Heart left ventricle (tissue), 16 donors: ENCODE measurements at regions of chr9 and their contacts with region 1.

Region 1: DNA sequence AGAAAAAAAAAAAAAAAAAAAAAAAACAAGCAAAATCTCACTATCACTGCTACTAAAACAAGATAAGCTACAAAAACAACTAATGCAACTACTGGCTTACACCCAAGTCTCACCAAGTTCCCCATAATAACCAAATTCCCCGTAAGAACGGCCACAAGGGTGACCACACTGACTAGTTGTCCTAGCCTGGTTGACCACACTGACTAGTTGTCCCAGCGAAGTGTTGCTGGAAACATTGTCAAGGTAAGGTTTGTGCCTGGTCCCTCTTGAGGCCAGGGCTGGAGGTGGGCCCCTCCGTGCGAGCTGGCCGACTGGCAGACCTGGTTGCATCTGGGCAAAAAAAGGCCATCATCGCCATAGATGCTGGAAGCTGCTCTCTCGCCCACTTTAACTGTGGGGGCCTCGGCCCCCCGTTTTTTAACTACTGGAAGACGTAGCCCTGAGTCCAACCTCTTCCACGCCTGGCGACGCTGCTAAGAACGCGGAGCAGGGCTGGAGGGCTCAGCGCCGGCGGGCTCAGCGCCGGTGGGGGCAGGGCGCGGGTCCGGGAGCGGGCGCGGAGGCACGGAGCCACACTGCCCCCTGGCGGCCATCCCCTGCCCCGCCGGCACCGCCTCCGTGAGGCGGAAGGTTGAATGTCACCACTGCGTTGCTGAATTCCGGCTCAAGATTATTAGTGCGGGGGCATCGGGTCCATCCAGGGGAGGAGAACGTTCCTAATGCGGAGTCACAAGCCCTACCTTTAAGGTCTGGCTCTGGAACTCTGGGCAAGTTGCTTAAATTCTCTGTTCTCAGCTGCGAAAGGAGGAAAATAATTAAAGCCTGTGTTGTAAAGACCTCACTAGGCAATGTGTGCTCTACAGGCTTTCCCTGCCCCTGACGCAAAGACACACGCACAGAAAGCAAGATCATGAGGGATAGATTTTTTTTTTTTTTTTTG is 84.0 kb downstream of the HSD17B3 start:
- DNase-seq: peak; percentile 61 to 86 (median 72)
- ATAC-seq: peak; percentile 81 to 93 (median 92)
- H3K4me3 ChIP-seq: peak overlapping the region in 10 of 12 donors; percentile 5 to 52 (median 38)
- H3K27ac ChIP-seq: peak overlapping the region in 8 of 12 donors; percentile 0 to 76 (median 51)
- H3K4me1 ChIP-seq: peaks cover 0 to 33% (median 15%) of the 10 kb centered on the region in 12 donors
- H3K27me3 ChIP-seq: peaks cover 0 to 38% (median 10%) of the 10 kb centered on the region in 9 donors
- CTCF ChIP-seq: peak; percentile 95 to 99 (median 97)
- POLR2A ChIP-seq: no peak

Region 2: DNA sequence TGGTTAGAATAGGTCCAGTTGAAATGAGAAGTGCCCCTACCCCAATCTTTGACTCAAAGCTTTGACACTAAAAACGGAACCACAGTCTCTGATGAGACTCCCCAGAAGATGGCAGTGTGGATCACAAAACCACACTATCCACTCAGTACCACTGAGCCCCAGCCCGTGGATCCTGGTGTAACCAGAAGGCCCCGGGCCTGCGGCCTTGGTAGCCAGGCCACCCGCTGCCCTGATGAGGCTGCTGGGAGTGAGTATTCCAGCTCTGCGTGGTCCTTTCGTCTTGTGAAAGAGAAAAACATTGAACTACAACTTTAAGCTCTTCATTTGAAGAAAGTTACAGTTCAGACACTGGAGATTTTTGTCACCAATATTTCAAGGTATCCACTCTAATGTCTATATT is 1536.5 kb before region 1 on chr9:
- intact Hi-C with region 1: loop called in 1 of 10 experiments (anchors 5 kb)
- DNase-seq: peak; percentile 69 to 87 (median 82)
- ATAC-seq: peak; percentile 92 to 98 (median 98)
- H3K4me3 ChIP-seq: no peak overlapping the region
- H3K27ac ChIP-seq: peak overlapping the region in 6 of 12 donors; percentile 11 to 47 (median 32)
- H3K4me1 ChIP-seq: peaks cover 0 to 9% (median 0%) of the 10 kb centered on the region in 12 donors
- H3K27me3 ChIP-seq: no peaks in the 10 kb centered on the region
- CTCF ChIP-seq: peak; percentile 62 to 85 (median 78)
- POLR2A ChIP-seq: no peak

Region 3: DNA sequence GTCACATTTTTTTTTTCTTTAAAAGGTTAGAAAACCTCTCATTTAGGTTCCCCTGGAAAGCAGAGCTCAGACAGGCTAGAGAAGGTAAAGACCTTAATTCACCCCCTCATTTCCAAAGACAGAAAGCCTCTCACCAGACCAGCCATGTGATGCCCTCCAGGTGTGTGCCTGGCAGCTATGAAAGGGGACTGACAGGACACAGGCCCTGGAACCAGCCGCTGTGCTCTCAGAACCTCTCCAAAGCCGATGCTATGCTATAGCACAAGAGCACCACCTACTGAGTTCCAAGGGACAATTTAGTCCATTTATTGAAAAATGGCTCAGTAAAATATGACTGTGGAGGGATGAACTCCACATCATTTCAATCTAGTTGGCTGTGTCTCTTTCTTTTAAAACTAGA is 949.3 kb before region 1 on chr9:
- intact Hi-C with region 1: loop called in 1 of 10 experiments (anchors 10 kb)
- DNase-seq: peak in 1 of 5 donors; percentile 20
- ATAC-seq: peak; percentile 37 to 86 (median 74)
- H3K4me3 ChIP-seq: no peak overlapping the region
- H3K27ac ChIP-seq: no peak overlapping the region
- H3K4me1 ChIP-seq: peaks cover 0 to 2% (median 0%) of the 10 kb centered on the region in 12 donors
- H3K27me3 ChIP-seq: no peaks in the 10 kb centered on the region
- CTCF ChIP-seq: peak in 11 of 12 donors; percentile 19 to 60 (median 38)
- POLR2A ChIP-seq: no peak

Region 4: GRCh38 chr9:95510709-95511615 is 707.1 kb before region 1 on chr9:
- intact Hi-C with region 1: loop called in 1 of 10 experiments (anchors 5 kb)
- DNase-seq: peak; percentile 88 to 93 (median 92)
- ATAC-seq: peak; percentile 74 to 86 (median 80)
- H3K4me3 ChIP-seq: peak overlapping the region; percentile 42 to 96 (median 74)
- H3K27ac ChIP-seq: peak overlapping the region; percentile 43 to 99 (median 92)
- H3K4me1 ChIP-seq: peaks cover 3 to 44% (median 15%) of the 10 kb centered on the region in 12 donors
- H3K27me3 ChIP-seq: peaks cover 0 to 52% (median 0%) of the 10 kb centered on the region in 9 donors
- CTCF ChIP-seq: no peak
- POLR2A ChIP-seq: peak; percentile 9 to 64

Region 5: GRCh38 chr9:96061293-96061987 is 156.6 kb before region 1 on chr9:
- intact Hi-C with region 1: loop called in 2 of 10 experiments (anchors 5 to 10 kb)
- DNase-seq: peak in 2 of 5 donors; percentile 37 to 40
- ATAC-seq: peak in 3 of 4 donors; percentile 72 to 84 (median 77)
- H3K4me3 ChIP-seq: peak overlapping the region in 1 of 12 donors; percentile 18
- H3K27ac ChIP-seq: peak overlapping the region in 2 of 12 donors; percentile 19 to 90
- H3K4me1 ChIP-seq: peaks cover 0 to 35% (median 0%) of the 10 kb centered on the region in 12 donors
- H3K27me3 ChIP-seq: no peaks in the 10 kb centered on the region
- CTCF ChIP-seq: peak; percentile 22 to 60 (median 43)
- POLR2A ChIP-seq: no peak

Region 6: DNA sequence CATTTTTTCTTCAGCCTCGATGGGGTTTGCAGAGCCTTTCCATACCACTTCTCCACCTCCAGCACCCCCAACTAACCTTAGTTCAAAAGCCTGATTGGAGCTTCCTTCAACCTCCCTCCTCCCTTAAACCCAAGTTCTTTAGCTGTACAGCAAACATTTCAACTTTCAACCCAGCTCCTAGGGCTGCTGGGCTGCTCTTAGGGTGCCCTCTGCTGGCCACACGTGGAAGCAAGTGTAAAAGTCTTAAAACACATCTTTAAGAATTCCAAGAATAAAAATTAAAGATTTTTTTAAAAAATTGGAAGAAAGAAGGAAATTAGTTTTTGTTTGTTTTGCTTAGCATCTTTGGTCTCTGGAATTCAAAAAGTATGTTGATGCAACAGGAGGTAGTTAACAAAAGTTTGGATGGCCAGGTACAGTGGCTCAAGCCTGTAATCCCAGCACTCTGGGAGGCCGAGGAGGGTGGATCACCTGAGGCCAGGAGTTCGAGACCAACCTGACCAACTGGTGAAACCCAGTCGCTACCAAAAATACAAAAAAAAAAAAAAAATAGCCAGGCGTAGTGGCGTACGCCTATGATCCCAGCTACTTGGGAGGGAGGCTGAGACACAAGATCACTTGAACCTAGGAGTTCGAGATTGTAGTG is 99.4 kb after region 1 on chr9:
- intact Hi-C with region 1: loop called in 1 of 10 experiments (anchors 5 kb)
- DNase-seq: peak in 2 of 5 donors; percentile 20 to 36
- ATAC-seq: peak in 3 of 4 donors; percentile 59 to 71 (median 62)
- H3K4me3 ChIP-seq: no peak overlapping the region
- H3K27ac ChIP-seq: no peak overlapping the region
- H3K4me1 ChIP-seq: peaks cover 0 to 4% (median 0%) of the 10 kb centered on the region in 12 donors
- H3K27me3 ChIP-seq: no peaks in the 10 kb centered on the region
- CTCF ChIP-seq: peak; percentile 62 to 92 (median 86)
- POLR2A ChIP-seq: no peak

Region 7: GRCh38 chr9:96350866-96351265 is 132.8 kb after region 1 on chr9:
- intact Hi-C with region 1: no loop called
- DNase-seq: no peak
- ATAC-seq: no peak
- H3K4me3 ChIP-seq: no peak overlapping the region
- H3K27ac ChIP-seq: no peak overlapping the region
- H3K4me1 ChIP-seq: no peaks in the 10 kb centered on the region
- H3K27me3 ChIP-seq: no peaks in the 10 kb centered on the region
- CTCF ChIP-seq: no peak
- POLR2A ChIP-seq: no peak

Region 8: GRCh38 chr9:96523374-96523773 is 305.4 kb after region 1 on chr9:
- intact Hi-C with region 1: no loop called
- DNase-seq: peak in 4 of 5 donors; percentile 61 to 73 (median 72)
- ATAC-seq: peak; percentile 63 to 96 (median 90)
- H3K4me3 ChIP-seq: peak overlapping the region in 3 of 12 donors; percentile 3 to 24 (median 12)
- H3K27ac ChIP-seq: peak overlapping the region in 11 of 12 donors; percentile 24 to 79 (median 60)
- H3K4me1 ChIP-seq: peaks cover 0 to 20% (median 4%) of the 10 kb centered on the region in 12 donors
- H3K27me3 ChIP-seq: no peaks in the 10 kb centered on the region
- CTCF ChIP-seq: no peak
- POLR2A ChIP-seq: no peak